ENCODE measurements at regions of chr15 and their contacts with region 1.

Region 1: GRCh38 chr15:41367418-41367817 is 34.7 kb downstream of the NUSAP1 start:
- DNase-seq: no peak
- H3K4me3 ChIP-seq: no peak overlapping the region
- H3K4me1 ChIP-seq: no peaks in the 10 kb centered on the region
- H3K27me3 ChIP-seq: no peaks in the 10 kb centered on the region

Region 2: GRCh38 chr15:40190591-40190990 is 1176.8 kb before region 1 on chr15:
- in situ Hi-C with region 1: loop called (anchors 25 kb)
- DNase-seq: no peak
- H3K4me3 ChIP-seq: no peak overlapping the region
- H3K4me1 ChIP-seq: peaks cover 3% of the 10 kb centered on the region; the same call in 1 of the 2 replicates
- H3K27me3 ChIP-seq: no peaks in the 10 kb centered on the region

Region 3: GRCh38 chr15:40702077-40702476 is 665.3 kb before region 1 on chr15:
- in situ Hi-C with region 1: loop called (anchors 25 kb)
- DNase-seq: no peak
- H3K4me3 ChIP-seq: no peak overlapping the region
- H3K4me1 ChIP-seq: no peaks in the 10 kb centered on the region
- H3K27me3 ChIP-seq: no peaks in the 10 kb centered on the region

Region 4: GRCh38 chr15:41061667-41062066 is 305.8 kb before region 1 on chr15:
- in situ Hi-C with region 1: loop called (anchors 25 kb)
- DNase-seq: no peak
- H3K4me3 ChIP-seq: no peak overlapping the region
- H3K4me1 ChIP-seq: no peaks in the 10 kb centered on the region
- H3K27me3 ChIP-seq: no peaks in the 10 kb centered on the region

Region 5: DNA sequence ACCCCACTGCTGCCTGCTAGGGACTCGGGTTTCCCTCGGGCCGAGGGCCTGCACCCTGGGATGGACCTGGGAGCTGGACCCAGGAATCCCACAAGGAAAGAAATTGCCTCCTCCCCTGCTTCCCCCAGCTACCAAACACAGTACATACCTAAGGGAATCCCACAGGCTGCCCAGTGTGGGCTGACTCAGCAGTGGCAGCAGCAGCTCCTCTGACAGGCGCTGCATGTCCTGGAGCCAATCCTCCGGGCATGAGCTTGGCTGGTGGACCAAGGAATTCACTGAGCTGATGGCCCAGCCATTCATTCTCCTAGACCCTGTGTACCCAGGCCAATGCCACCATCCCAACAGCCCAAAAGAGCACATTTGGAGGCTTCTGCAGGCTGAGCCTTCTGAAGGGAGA is 155.7 kb after region 1 on chr15:
- in situ Hi-C with region 1: no loop called
- DNase-seq: no peak
- H3K4me3 ChIP-seq: no peak overlapping the region
- H3K4me1 ChIP-seq: no peaks in the 10 kb centered on the region
- H3K27me3 ChIP-seq: no peaks in the 10 kb centered on the region